Prostate gland (tissue), 2 donors: ENCODE measurements at regions of chr2 and their contacts with region 1.

Region 1: DNA sequence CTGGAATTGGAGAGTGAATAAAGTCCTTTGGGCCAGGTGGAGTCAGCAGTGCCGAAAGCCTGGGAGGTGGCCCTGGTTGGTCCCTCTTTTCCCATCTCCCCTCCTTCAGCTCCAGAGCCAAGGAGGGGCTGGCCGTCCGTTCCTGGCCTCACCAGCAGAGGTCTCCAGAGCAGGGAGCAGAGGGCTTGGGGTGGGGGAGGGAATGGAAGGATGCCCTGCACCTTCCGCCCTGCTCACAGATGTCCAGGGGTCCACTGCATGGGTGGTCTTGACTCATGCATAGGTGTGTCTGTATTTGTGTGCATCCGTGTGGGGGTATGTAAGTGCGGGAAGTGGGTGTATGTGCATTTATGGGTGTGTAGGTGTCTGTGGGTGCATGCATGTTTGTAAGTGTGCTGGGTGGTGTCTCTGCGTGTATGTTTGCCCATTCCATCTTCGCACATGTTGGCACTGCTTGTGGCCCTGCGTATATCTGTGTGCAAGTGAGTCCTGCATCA is 201.8 kb downstream of the ZFP36L2 start:
- DNase-seq: peak; percentile 32
- H3K4me3 ChIP-seq: no peak overlapping the region
- H3K27ac ChIP-seq: no peak overlapping the region
- H3K4me1 ChIP-seq: no peaks in the 10 kb centered on the region
- H3K27me3 ChIP-seq: no peaks in the 10 kb centered on the region
- CTCF ChIP-seq: peak; percentile 62 to 81 (median 72)
- POLR2A ChIP-seq: no peak

Region 2: GRCh38 chr2:42974721-42975717 is 49.5 kb before region 1 on chr2:
- intact Hi-C with region 1: loop called (anchors 5 kb)
- DNase-seq: peak; percentile 64
- H3K4me3 ChIP-seq: peak overlapping the region; percentile 18 to 29
- H3K27ac ChIP-seq: peak overlapping the region; percentile 46 to 65
- H3K4me1 ChIP-seq: no peaks in the 10 kb centered on the region
- H3K27me3 ChIP-seq: no peaks in the 10 kb centered on the region
- CTCF ChIP-seq: peak; percentile 88 to 96 (median 92)
- POLR2A ChIP-seq: no peak

Region 3: GRCh38 chr2:43210467-43211303 is 186.1 kb after region 1 on chr2:
- intact Hi-C with region 1: no loop called
- DNase-seq: no peak
- H3K4me3 ChIP-seq: no peak overlapping the region
- H3K27ac ChIP-seq: no peak overlapping the region
- H3K4me1 ChIP-seq: no peaks in the 10 kb centered on the region
- H3K27me3 ChIP-seq: no peaks in the 10 kb centered on the region
- CTCF ChIP-seq: no peak
- POLR2A ChIP-seq: no peak